ENCODE measurements at regions of chr20 and their contacts with region 1.

Region 1: DNA sequence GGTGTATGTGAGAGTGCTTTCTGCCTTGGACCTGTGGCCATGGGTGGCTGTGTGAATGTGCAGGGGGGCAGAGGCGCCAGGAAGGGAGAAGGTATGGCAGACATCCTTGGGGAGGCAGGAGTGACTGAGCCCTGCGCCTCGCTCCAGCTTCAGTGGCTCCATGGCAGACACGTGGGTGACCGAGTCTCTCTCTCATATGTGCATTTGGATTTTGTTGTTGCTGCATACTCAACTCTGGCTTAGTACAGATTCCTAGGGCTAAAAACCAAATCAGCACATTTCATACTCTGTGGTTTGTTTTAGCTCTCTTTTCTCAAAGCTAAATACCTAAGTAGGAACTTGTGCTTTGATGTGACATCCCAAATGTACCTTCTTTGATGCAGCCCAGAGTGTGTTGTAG is 97.6 kb downstream of the DTD1 start:
- DNase-seq: no peak
- H3K4me3 ChIP-seq: no peak overlapping the region
- H3K27ac ChIP-seq: no peak overlapping the region
- H3K4me1 ChIP-seq: no peaks in the 10 kb centered on the region
- H3K27me3 ChIP-seq: no peaks in the 10 kb centered on the region
- CTCF ChIP-seq: no peak

Region 2: GRCh38 chr20:19260412-19261090 is 575.1 kb after region 1 on chr20:
- CTCF ChIA-PET with region 1: no interaction called
- POLR2A ChIA-PET with region 1: interaction called, 11 read pairs
- intact Hi-C with region 1: no loop called
- DNase-seq: no peak
- H3K4me3 ChIP-seq: no peak overlapping the region
- H3K27ac ChIP-seq: no peak overlapping the region
- H3K4me1 ChIP-seq: no peaks in the 10 kb centered on the region
- H3K27me3 ChIP-seq: peaks cover 3% of the 10 kb centered on the region; the same call in 1 of the 2 replicates
- CTCF ChIP-seq: no peak